HCT116 (cell line): ENCODE measurements at regions of chr12 and their contacts with region 1.

Region 1: GRCh38 chr12:82461851-82462250 is 103.5 kb downstream of the METTL25 start:
- DNase-seq: no peak
- ATAC-seq: no peak
- H3K4me3 ChIP-seq: no peak overlapping the region
- H3K27ac ChIP-seq: no peak overlapping the region
- H3K4me1 ChIP-seq: no peaks in the 10 kb centered on the region
- H3K27me3 ChIP-seq: no peaks in the 10 kb centered on the region
- CTCF ChIP-seq: no peak
- POLR2A ChIP-seq: no peak
- RAD21 ChIP-seq: no peak

Region 2: DNA sequence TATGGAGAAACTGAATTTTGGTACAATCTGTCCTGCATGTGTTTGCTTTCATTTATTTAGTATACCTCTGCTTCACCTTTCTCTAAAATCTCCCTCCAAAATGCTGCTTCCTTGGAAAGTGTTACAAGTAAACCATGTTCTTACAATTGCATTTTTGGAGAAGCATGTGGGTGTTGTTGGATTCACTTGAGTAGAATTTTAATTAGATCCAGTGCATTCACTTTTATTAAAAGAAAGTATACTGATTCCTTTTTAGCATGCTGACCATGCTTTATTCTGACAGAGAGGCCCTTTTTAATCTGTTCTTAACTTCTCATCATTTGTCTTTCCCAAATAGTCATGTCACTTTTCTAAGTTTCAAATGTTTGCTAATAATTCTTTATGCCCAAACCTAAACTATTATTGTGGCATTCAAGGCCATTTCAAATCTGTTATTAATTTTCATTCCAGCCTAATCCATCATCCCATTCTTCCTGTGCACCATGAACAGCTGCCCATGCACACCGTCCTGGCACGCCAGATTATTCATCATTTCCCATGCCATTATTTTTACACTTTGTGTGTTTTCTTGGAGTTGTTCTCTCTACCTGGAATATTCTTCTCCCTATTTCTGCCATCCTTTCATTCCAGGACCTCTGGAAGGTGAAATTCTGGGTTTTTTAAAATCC is 12.8 kb before region 1 on chr12:
- CTCF ChIA-PET with region 1: no interaction called
- POLR2A ChIA-PET with region 1: no interaction called
- RAD21 ChIA-PET with region 1: no interaction called
- intact Hi-C with region 1: loop called (anchors 2 kb)
- DNase-seq: no peak
- ATAC-seq: no peak
- H3K4me3 ChIP-seq: no peak overlapping the region
- H3K27ac ChIP-seq: no peak overlapping the region
- H3K4me1 ChIP-seq: no peaks in the 10 kb centered on the region
- H3K27me3 ChIP-seq: no peaks in the 10 kb centered on the region
- CTCF ChIP-seq: no peak
- POLR2A ChIP-seq: no peak
- RAD21 ChIP-seq: no peak